ENCODE measurements at regions of chr17 and their contacts with region 1.

Region 1: GRCh38 chr17:46894476-46895151 is 28.3 kb upstream of the GOSR2 start:
- DNase-seq: no peak
- H3K4me3 Mint-ChIP-seq: no peak overlapping the region
- H3K27ac Mint-ChIP-seq: no peak overlapping the region
- H3K4me1 Mint-ChIP-seq: no peaks in the 10 kb centered on the region
- H3K27me3 Mint-ChIP-seq: peaks cover 13% of the 10 kb centered on the region

Region 2: GRCh38 chr17:46795379-46795952 is 99.1 kb before region 1 on chr17:
- CTCF ChIA-PET with region 1: no interaction called
- POLR2A ChIA-PET with region 1: interaction called, 10 read pairs
- DNase-seq: no peak
- H3K4me3 Mint-ChIP-seq: no peak overlapping the region
- H3K27ac Mint-ChIP-seq: no peak overlapping the region
- H3K4me1 Mint-ChIP-seq: no peaks in the 10 kb centered on the region
- H3K27me3 Mint-ChIP-seq: peaks cover 7% of the 10 kb centered on the region

Region 3: GRCh38 chr17:46869975-46870803 is 24.4 kb before region 1 on chr17:
- CTCF ChIA-PET with region 1: no interaction called
- POLR2A ChIA-PET with region 1: no interaction called
- DNase-seq: no peak
- H3K4me3 Mint-ChIP-seq: no peak overlapping the region
- H3K27ac Mint-ChIP-seq: no peak overlapping the region
- H3K4me1 Mint-ChIP-seq: peaks cover 2% of the 10 kb centered on the region
- H3K27me3 Mint-ChIP-seq: peaks cover 4% of the 10 kb centered on the region

Region 4: GRCh38 chr17:46922804-46923635 is 28.4 kb after region 1 on chr17 and contains the start of gene GOSR2:
- CTCF ChIA-PET with region 1: no interaction called
- POLR2A ChIA-PET with region 1: no interaction called
- DNase-seq: peak; percentile 90
- H3K4me3 Mint-ChIP-seq: peak within 1 kb of the TSS; percentile 88
- H3K27ac Mint-ChIP-seq: peak within 1 kb of the TSS; percentile 100
- H3K4me1 Mint-ChIP-seq: peaks cover 52% of the 10 kb centered on the region
- H3K27me3 Mint-ChIP-seq: peaks cover 2% of the 10 kb centered on the region
- total RNA-seq, gene GOSR2: 56.5 to 56.7 TPM